ENCODE measurements at regions of chr2 and their contacts with region 1.

Region 1: GRCh38 chr2:178891265-178891958 is 84.2 kb upstream of the TTN start:
- DNase-seq: peak; percentile 21
- H3K4me3 ChIP-seq: no peak overlapping the region
- H3K27ac ChIP-seq: no peak overlapping the region
- H3K4me1 ChIP-seq: peaks cover 0 to 8% of the 10 kb centered on the region in 2 experiments
- H3K27me3 ChIP-seq: no peaks in the 10 kb centered on the region
- CTCF ChIP-seq: peak; percentile 93
- EP300 ChIP-seq: no peak
- RAD21 ChIP-seq: peak; percentile 70

Region 2: GRCh38 chr2:178796079-178796677 is 95.2 kb before region 1 on chr2:
- CTCF ChIA-PET with region 1: interaction called, 12 read pairs
- POLR2A ChIA-PET with region 1: no interaction called
- DNase-seq: peak; percentile 32
- H3K4me3 ChIP-seq: no peak overlapping the region
- H3K27ac ChIP-seq: no peak overlapping the region
- H3K4me1 ChIP-seq: no peaks in the 10 kb centered on the region
- H3K27me3 ChIP-seq: no peaks in the 10 kb centered on the region
- CTCF ChIP-seq: peak; percentile 85
- EP300 ChIP-seq: no peak
- RAD21 ChIP-seq: peak; percentile 81

Region 3: DNA sequence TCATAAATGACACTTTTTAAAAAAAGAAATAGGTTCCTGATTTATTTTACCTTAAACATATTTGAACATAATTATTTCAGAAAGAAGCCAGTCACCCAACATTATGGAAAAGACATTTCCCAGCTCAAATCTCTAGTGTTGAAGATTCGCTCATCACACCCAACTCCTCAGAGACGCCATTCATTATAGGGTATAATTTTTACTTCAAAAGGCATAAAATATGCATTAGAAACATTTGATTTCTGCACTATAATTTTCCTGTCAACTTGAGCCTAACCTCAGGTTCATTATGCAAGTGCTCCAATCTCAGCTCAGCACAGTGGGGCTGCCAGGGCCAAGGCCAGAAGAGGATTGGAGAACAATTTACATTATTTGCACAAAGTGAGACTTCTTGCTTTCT is 25.4 kb before region 1 on chr2:
- CTCF ChIA-PET with region 1: interaction called, 17 read pairs
- POLR2A ChIA-PET with region 1: no interaction called
- DNase-seq: no peak
- H3K4me3 ChIP-seq: no peak overlapping the region
- H3K27ac ChIP-seq: no peak overlapping the region
- H3K4me1 ChIP-seq: peaks cover 6 to 30% of the 10 kb centered on the region in 2 experiments
- H3K27me3 ChIP-seq: no peaks in the 10 kb centered on the region
- CTCF ChIP-seq: no peak
- EP300 ChIP-seq: no peak
- RAD21 ChIP-seq: no peak

Region 4: GRCh38 chr2:178874529-178875240 is 16.7 kb before region 1 on chr2:
- CTCF ChIA-PET with region 1: interaction called, 16 read pairs
- POLR2A ChIA-PET with region 1: no interaction called
- DNase-seq: no peak
- H3K4me3 ChIP-seq: no peak overlapping the region
- H3K27ac ChIP-seq: no peak overlapping the region; a peak in 1 of 4 replicates
- H3K4me1 ChIP-seq: peaks cover 2 to 12% of the 10 kb centered on the region in 2 experiments; a peak in 3 of 4 replicates
- H3K27me3 ChIP-seq: no peaks in the 10 kb centered on the region
- CTCF ChIP-seq: no peak
- EP300 ChIP-seq: no peak
- RAD21 ChIP-seq: no peak

Region 5: GRCh38 chr2:178905261-178905660 is 13.8 kb after region 1 on chr2:
- CTCF ChIA-PET with region 1: interaction called, 18 read pairs
- POLR2A ChIA-PET with region 1: no interaction called
- DNase-seq: no peak
- H3K4me3 ChIP-seq: no peak overlapping the region
- H3K27ac ChIP-seq: no peak overlapping the region
- H3K4me1 ChIP-seq: no peaks in the 10 kb centered on the region
- H3K27me3 ChIP-seq: no peaks in the 10 kb centered on the region
- CTCF ChIP-seq: no peak
- EP300 ChIP-seq: no peak
- RAD21 ChIP-seq: no peak

Region 6: DNA sequence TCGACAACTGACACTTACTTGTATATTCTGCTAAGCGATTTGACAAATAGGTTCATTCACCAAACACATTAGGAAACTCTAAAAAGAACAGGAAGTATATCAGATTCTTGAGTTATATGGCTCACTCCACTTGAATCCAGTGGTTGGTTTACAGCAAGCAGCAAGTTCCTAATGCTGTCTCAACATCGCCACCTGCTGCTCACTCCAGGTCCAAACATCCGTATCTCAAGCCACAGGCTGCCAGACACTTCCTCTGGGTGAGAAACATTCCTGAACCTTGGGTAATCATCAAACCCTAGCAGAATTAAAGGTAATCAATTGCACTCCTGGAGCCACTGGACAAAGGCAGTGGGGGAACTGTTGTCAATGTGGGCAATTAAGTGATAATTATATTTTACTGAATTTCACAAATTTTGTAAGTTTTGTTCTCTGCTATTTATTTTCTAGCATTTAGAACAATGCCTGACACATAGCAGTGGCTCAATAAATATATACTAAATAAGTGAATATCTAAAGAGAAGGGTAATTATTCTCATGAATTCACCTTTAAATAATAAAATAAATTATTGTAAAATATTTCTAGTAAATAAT is 22.9 kb after region 1 on chr2:
- CTCF ChIA-PET with region 1: interaction called, 14 read pairs
- POLR2A ChIA-PET with region 1: no interaction called
- DNase-seq: peak; percentile 64
- H3K4me3 ChIP-seq: peak overlapping the region in 1 of 2 experiments; percentile 34; a peak in 1 of 4 replicates
- H3K27ac ChIP-seq: no peak overlapping the region
- H3K4me1 ChIP-seq: peaks cover 0 to 6% of the 10 kb centered on the region in 2 experiments; a peak in 2 of 4 replicates
- H3K27me3 ChIP-seq: no peaks in the 10 kb centered on the region
- CTCF ChIP-seq: peak; percentile 90
- EP300 ChIP-seq: no peak
- RAD21 ChIP-seq: peak; percentile 92

Region 7: GRCh38 chr2:179129574-179130238 is 238.3 kb after region 1 on chr2:
- CTCF ChIA-PET with region 1: interaction called, 12 read pairs
- POLR2A ChIA-PET with region 1: no interaction called
- DNase-seq: peak; percentile 6
- H3K4me3 ChIP-seq: no peak overlapping the region
- H3K27ac ChIP-seq: no peak overlapping the region
- H3K4me1 ChIP-seq: peaks cover 0 to 4% of the 10 kb centered on the region in 2 experiments; a peak in 2 of 4 replicates
- H3K27me3 ChIP-seq: no peaks in the 10 kb centered on the region
- CTCF ChIP-seq: peak; percentile 75
- EP300 ChIP-seq: no peak
- RAD21 ChIP-seq: peak; percentile 71